PC-9 (cell line): ENCODE measurements at regions of chr14 and their contacts with region 1.

Region 1: DNA sequence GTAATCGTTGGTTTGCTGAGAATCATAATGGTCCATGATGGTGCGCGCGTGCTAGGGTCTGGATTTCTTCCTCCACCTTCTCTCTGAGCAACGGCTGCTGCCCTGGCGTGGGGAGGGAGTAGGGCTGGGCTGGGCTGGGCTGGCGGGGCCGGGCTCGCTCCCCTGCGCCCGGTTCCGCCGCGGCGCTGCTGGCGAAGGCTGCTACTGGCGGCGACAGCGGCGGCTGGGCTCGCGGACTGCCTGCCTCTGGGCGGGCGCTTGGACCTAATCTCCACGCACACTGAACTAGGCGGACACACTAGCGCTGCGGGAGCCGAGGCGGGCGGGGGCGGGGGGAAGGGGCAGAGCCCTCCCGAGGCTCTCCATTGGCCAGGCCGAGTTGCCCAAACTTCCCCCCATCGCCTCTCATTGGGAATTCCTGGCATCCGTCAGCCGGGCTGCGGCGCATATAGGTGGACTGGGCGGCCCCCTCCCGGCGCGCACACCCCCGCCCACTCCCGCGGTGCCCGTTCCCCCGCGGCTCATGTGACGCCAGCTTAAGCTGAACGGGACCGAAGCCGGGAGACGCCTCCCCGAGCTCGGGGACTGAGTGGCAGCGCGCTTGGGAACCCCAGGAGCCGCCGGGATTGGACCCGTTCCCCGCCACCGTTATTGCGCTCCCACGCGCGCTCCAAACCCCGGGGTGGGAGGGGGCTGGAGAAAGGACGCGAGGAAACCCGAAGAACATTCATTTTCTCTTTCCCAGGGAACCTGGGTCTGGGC is at the start of gene ACTN1:
- DNase-seq: peak; percentile 95 to 98
- H3K4me3 ChIP-seq: peak within 1 kb of the TSS; percentile 76
- H3K27ac ChIP-seq: peak within 1 kb of the TSS; percentile 93
- H3K4me1 ChIP-seq: peaks cover 47% of the 10 kb centered on the region
- H3K27me3 ChIP-seq: no peaks in the 10 kb centered on the region
- CTCF ChIP-seq: no peak
- total RNA-seq, gene ACTN1: 314 and 323 TPM in 2 replicates

Region 2: DNA sequence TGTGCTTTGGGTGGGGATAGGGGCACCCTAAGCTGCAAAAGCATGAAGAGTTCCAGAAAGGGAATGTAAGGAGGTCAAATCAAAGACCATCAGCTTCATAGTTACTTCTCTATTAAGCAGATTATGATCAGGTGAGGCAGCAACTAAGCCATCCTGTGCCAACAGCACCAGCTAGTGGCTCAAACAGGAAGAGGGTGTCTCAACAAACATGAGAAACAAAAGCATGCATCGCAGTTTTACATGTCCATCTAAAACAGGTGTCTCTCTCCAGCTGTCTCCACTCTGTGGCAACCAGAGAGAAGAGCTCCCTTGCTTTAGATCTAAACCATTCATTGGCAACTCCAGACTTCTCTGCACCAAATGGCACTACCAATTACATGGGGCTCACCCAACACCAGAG is 53.0 kb before region 1 on chr14:
- CTCF ChIA-PET with region 1: no interaction called
- POLR2A ChIA-PET with region 1: interaction called, 11 read pairs
- intact Hi-C with region 1: no loop called
- DNase-seq: no peak
- H3K4me3 ChIP-seq: no peak overlapping the region
- H3K27ac ChIP-seq: peak overlapping the region; percentile 70
- H3K4me1 ChIP-seq: peaks cover 47% of the 10 kb centered on the region
- H3K27me3 ChIP-seq: no peaks in the 10 kb centered on the region
- CTCF ChIP-seq: peak; percentile 58

Region 3: DNA sequence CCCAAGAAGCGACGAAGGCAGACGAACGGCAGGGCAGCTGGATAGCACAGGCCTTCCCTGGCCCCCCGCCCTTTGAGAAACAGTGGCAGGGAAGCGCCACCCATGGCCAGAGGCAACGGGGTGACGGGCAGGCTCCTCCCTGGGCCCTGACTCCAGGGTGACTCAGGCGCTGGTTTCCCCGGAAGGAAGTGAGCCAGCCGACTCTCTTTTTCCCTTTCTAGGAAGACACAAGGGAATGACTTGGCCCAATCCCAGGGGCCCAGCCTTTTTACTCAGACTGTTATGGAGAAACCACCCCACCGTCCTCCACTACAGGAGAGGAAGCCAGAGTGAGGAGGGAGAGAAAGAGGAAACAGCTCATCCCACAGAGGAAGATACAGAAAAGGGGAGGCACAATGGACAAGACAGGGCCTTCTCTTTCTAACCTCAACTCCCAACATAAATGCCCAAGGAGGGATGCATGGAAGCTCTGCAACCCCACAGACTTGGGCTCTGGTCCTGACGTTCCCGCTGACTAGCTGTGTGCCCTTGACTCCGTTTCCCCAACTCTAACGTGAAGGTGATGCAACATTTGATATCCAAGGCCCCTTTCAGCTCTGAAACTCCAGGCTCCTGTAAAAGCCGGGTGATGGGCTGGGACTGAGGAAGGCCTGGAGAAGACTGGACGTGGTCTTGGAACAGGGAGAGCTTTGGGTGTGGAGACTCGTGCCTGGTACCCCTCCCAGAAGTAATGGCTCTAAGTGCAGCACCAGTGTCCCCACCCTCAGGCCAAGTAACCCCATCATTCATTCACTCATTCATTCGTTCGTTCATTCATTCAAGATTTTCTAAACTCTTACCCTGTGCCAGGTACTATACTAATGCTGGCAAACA is 27.9 kb before region 1 on chr14:
- CTCF ChIA-PET with region 1: interaction called, 14 read pairs
- POLR2A ChIA-PET with region 1: interaction called, 4 read pairs
- intact Hi-C with region 1: loop called (anchors 1 kb)
- DNase-seq: peak; percentile 96 to 97
- H3K4me3 ChIP-seq: peak overlapping the region; percentile 32; the same call in 1 of the 2 replicates
- H3K27ac ChIP-seq: peak overlapping the region; percentile 77
- H3K4me1 ChIP-seq: peaks cover 60% of the 10 kb centered on the region
- H3K27me3 ChIP-seq: no peaks in the 10 kb centered on the region
- CTCF ChIP-seq: no peak

Region 4: DNA sequence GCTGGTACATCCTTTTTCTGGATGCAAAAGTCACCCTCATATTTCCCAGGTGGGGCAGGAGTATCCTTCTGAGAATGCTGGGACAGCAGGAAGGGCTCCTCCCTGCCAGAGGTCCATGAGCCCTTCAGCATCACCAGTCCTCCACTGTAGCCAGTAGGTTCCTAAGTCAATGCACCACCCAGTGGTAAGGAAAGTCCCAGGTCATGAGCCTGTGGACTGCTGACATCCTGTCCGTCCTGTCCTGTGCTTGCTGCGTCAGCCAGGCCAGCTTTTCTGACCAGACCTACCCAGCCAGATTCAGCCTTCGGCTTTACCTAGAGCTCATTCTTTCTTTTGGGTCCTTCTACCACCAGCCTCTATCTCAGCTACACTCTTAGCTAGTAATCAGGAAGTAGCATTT is 22.9 kb after region 1 on chr14:
- CTCF ChIA-PET with region 1: interaction called, 20 read pairs
- POLR2A ChIA-PET with region 1: interaction called, 4 read pairs
- intact Hi-C with region 1: no loop called
- DNase-seq: peak; percentile 51 to 66
- H3K4me3 ChIP-seq: no peak overlapping the region
- H3K27ac ChIP-seq: no peak overlapping the region
- H3K4me1 ChIP-seq: peaks cover 20% of the 10 kb centered on the region
- H3K27me3 ChIP-seq: no peaks in the 10 kb centered on the region
- CTCF ChIP-seq: peak; percentile 33; the same call in 1 of the 2 replicates

Region 5: GRCh38 chr14:69027242-69027913 is 48.2 kb after region 1 on chr14:
- CTCF ChIA-PET with region 1: no interaction called
- POLR2A ChIA-PET with region 1: no interaction called
- intact Hi-C with region 1: no loop called
- DNase-seq: no peak
- H3K4me3 ChIP-seq: no peak overlapping the region
- H3K27ac ChIP-seq: no peak overlapping the region
- H3K4me1 ChIP-seq: no peaks in the 10 kb centered on the region
- H3K27me3 ChIP-seq: no peaks in the 10 kb centered on the region
- CTCF ChIP-seq: no peak

Region 6: DNA sequence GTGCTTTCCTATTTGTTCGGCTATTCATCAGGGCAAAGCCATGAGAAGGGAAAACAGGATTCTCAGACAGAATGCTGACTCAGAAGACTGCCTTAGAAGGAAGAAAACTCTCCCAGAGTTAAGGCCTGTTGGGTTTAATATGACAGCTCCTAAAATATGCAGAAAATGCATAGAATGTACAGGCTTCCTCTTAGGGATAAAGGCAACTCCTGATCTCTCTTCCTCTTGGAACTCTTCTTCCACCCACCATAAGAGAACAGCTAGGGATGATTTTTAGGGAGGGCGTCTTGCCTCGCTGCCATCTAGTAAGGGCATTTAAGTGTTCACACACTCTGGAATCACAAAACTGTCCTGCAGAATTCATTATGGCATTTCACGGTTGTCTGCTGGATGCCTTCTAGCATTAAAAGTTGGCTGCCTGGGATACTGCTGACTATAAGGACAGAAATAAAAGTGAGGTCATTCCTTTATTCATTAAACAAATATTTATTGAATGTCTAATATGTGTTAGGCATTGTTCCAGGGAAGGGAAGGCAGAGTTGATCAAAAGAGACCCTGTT is 100.1 kb after region 1 on chr14:
- CTCF ChIA-PET with region 1: interaction called, 3 read pairs
- POLR2A ChIA-PET with region 1: interaction called, 20 read pairs
- intact Hi-C with region 1: loop called (anchors 1 kb)
- DNase-seq: peak; percentile 30 to 92
- H3K4me3 ChIP-seq: no peak overlapping the region
- H3K27ac ChIP-seq: peak overlapping the region; percentile 77
- H3K4me1 ChIP-seq: peaks cover 47% of the 10 kb centered on the region
- H3K27me3 ChIP-seq: no peaks in the 10 kb centered on the region
- CTCF ChIP-seq: no peak

Region 7: GRCh38 chr14:69133206-69134125 is 154.3 kb after region 1 on chr14:
- CTCF ChIA-PET with region 1: no interaction called
- POLR2A ChIA-PET with region 1: no interaction called
- intact Hi-C with region 1: no loop called
- DNase-seq: peak; percentile 11 to 64
- H3K4me3 ChIP-seq: no peak overlapping the region; the same call in 1 of the 2 replicates
- H3K27ac ChIP-seq: peak overlapping the region; percentile 79
- H3K4me1 ChIP-seq: peaks cover 31% of the 10 kb centered on the region
- H3K27me3 ChIP-seq: no peaks in the 10 kb centered on the region
- CTCF ChIP-seq: no peak

Region 8: DNA sequence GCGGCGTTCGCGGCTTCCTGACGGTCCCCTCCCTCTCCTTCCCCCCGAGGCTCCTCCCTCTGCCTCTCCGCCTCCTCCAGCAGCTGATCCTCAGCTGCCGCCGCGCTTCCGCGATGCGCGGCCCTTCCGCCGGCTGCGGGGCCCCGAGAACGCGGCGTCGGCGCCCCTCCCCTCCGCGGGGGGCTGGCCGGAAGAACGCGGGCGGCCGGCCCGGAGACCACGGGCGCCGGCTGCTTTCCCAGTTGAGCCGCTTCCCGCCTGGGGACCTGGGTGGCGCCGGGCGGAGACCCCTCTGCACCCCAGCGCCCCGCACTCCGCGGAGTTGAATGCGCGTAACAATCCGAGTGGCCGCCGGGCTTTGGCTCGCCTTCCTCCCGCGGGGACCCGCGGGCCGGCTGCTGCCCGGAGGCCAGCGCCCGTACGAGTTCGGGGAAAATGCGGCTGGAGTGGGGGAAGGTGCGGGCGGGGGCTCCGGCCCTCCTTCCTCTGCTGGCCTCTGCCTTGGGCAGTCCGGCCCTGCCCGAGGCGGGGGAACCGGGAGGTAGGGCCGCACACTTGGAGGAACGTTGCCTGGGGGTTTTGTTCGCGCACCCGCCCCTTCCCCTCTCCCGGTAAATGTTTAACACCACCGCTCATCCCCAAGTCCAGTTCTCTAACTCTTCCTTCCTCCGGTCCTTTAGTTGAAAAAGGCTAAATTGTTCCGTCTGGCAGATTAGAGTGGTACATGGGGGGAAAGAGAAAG is 174.1 kb after region 1 on chr14:
- CTCF ChIA-PET with region 1: no interaction called
- POLR2A ChIA-PET with region 1: no interaction called
- intact Hi-C with region 1: loop called (anchors 5 kb)
- DNase-seq: peak; percentile 83 to 92
- H3K4me3 ChIP-seq: peak overlapping the region; percentile 95
- H3K27ac ChIP-seq: no peak overlapping the region
- H3K4me1 ChIP-seq: peaks cover 17% of the 10 kb centered on the region
- H3K27me3 ChIP-seq: no peaks in the 10 kb centered on the region
- CTCF ChIP-seq: no peak

Region 9: GRCh38 chr14:69191340-69192111 is 212.3 kb after region 1 on chr14 and contains the start of gene EXD2:
- CTCF ChIA-PET with region 1: no interaction called
- POLR2A ChIA-PET with region 1: no interaction called
- intact Hi-C with region 1: no loop called
- DNase-seq: peak; percentile 89 to 93
- H3K4me3 ChIP-seq: peak within 1 kb of the TSS; percentile 67
- H3K27ac ChIP-seq: peak within 1 kb of the TSS; percentile 36
- H3K4me1 ChIP-seq: peaks cover 16% of the 10 kb centered on the region
- H3K27me3 ChIP-seq: no peaks in the 10 kb centered on the region
- CTCF ChIP-seq: no peak
- total RNA-seq, gene EXD2: 21.4 and 25.5 TPM in 2 replicates